ENCODE measurements at regions of chr3 and their contacts with region 1.

Region 1: GRCh38 chr3:38297947-38298711 is 16.0 kb downstream of the SLC22A14 start:
- DNase-seq: no peak
- H3K4me3 ChIP-seq: no peak overlapping the region
- H3K27ac ChIP-seq: no peak overlapping the region
- H3K4me1 ChIP-seq: no peaks in the 10 kb centered on the region
- H3K27me3 ChIP-seq: no peaks in the 10 kb centered on the region
- CTCF ChIP-seq: peak in 1 of 3 experiments; percentile 29; a peak in 1 of 4 replicates
- EP300 ChIP-seq: no peak
- POLR2A ChIP-seq: no peak
- RAD21 ChIP-seq: no peak

Region 2: GRCh38 chr3:38117748-38118420 is 180.2 kb before region 1 on chr3:
- CTCF ChIA-PET with region 1: interaction called, 13 read pairs
- POLR2A ChIA-PET with region 1: interaction called, 5 read pairs
- DNase-seq: peak in 1 of 2 experiments; percentile 87
- H3K4me3 ChIP-seq: no peak overlapping the region
- H3K27ac ChIP-seq: no peak overlapping the region
- H3K4me1 ChIP-seq: no peaks in the 10 kb centered on the region
- H3K27me3 ChIP-seq: no peaks in the 10 kb centered on the region
- CTCF ChIP-seq: peak in 2 of 3 experiments; percentile 83 to 96; a peak in 3 of 4 replicates
- EP300 ChIP-seq: no peak
- POLR2A ChIP-seq: no peak; a peak in 1 of 3 replicates
- RAD21 ChIP-seq: peak; percentile 86 to 87

Region 3: DNA sequence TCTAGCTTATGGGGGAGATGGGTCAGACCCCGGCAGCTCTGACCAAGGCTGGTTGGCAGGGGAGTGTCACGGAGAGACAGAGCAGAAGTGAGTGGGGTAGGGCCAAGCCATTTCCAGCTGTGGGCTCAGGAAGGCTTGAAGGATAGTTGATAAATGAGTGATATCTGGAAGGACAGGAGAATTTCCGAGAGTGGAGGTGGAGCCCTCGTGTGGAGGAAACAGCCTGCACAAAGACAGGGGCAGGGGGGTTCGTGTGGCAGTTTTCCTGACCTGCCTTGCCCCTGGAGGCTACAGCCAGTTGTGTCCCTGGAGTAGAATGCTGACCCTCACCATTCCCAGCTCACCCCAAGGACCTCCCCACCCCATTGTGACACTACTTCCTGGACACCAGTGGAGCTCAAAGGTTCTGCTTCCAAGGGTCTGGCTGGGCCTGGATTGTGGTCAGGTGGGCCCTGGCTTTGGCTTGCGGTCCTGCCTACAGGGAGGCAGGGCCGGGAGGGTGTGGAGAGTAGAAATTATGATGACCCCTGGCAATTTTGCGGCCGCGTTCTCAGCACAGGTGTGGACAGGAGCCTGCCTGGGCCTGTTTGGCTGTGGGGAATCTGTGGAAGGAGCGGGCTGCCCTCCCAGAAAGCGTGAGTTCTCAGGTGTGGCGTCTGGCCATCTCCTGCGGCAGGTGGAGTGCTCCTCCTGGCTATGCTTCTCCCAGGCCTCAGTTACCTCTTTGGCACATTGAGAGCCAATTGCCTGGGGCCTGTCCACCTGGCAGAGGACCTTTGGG is 16.0 kb before region 1 on chr3 and contains the start of gene SLC22A14:
- CTCF ChIA-PET with region 1: interaction called, 29 read pairs
- POLR2A ChIA-PET with region 1: no interaction called
- DNase-seq: peak; percentile 15 to 64
- H3K4me3 ChIP-seq: no peak within 1 kb of the TSS
- H3K27ac ChIP-seq: no peak within 1 kb of the TSS
- H3K4me1 ChIP-seq: no peaks in the 10 kb centered on the region
- H3K27me3 ChIP-seq: no peaks in the 10 kb centered on the region
- CTCF ChIP-seq: peak; percentile 65 to 67 (median 67)
- EP300 ChIP-seq: no peak
- POLR2A ChIP-seq: no peak
- RAD21 ChIP-seq: peak; percentile 58 to 70
- total RNA-seq, gene SLC22A14: not detected in 2 replicates

Region 4: GRCh38 chr3:38327335-38328009 is 29.3 kb after region 1 on chr3:
- CTCF ChIA-PET with region 1: interaction called, 10 read pairs
- POLR2A ChIA-PET with region 1: no interaction called
- DNase-seq: no peak
- H3K4me3 ChIP-seq: no peak overlapping the region
- H3K27ac ChIP-seq: no peak overlapping the region
- H3K4me1 ChIP-seq: no peaks in the 10 kb centered on the region
- H3K27me3 ChIP-seq: no peaks in the 10 kb centered on the region; a peak in 2 of 7 replicates
- CTCF ChIP-seq: no peak
- EP300 ChIP-seq: no peak
- POLR2A ChIP-seq: no peak
- RAD21 ChIP-seq: no peak

Region 5: DNA sequence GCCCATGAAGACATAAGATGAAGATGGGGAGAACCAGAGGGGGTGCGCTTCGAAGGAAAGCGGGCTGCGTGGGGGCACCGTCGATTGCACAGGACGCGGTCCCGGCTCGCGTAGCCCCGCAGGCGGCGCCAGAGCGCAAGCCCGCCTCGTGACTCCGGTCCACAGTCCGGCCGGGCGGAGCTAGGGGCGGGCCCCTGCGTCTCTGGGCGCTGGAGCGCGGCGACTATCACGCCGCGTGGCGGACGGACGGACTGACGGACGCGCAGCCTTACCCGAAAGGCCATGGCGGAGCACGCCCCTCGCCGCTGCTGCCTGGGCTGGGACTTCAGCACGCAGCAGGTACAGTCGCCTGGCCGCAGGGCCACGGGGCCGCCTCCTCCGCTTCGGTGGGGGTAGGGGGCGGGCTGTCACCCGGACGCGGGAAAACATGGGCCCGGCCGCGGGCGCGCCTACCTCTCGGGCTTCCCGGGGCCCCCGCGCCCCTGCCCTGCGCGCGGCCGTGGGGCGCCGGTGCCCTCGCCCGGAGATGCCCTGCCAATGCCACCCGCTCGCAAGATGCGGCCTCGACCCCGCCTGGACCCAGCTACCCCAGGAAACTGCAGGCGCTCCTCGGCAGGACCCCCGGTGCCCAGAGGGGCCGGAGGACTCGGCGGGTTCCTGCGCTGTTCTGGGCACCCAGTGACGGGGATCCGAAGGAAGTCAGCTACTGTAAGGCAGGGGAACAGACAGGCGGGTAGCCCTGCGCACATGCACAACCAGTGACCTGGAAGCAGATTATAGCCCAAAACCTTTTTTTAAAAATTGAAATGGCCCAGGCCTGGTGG is 48.7 kb after region 1 on chr3 and contains the start of gene XYLB:
- CTCF ChIA-PET with region 1: interaction called, 13 read pairs
- POLR2A ChIA-PET with region 1: no interaction called
- DNase-seq: peak; percentile 33 to 86
- H3K4me3 ChIP-seq: peak within 1 kb of the TSS; percentile 52 to 71 (median 65)
- H3K27ac ChIP-seq: no peak within 1 kb of the TSS
- H3K4me1 ChIP-seq: 0 out of 7 replicates have a peak, but pooled peaks cover 0 to 3% (median 0%) of the 10 kb centered on the region in 4 experiments
- H3K27me3 ChIP-seq: peaks cover 0 to 14% (median 4%) of the 10 kb centered on the region in 4 experiments; a peak in 4 of 7 replicates
- CTCF ChIP-seq: peak; percentile 72 to 85 (median 76)
- EP300 ChIP-seq: no peak
- POLR2A ChIP-seq: 0 out of 3 replicates have a peak, but pooled peaks of 1 of the 2 experiments have one; percentile 26
- RAD21 ChIP-seq: peak; percentile 59 to 64
- total RNA-seq, gene XYLB: 5.3 and 5.5 TPM in 2 replicates